A673 (cell line): ENCODE measurements at regions of chr5 and their contacts with region 1.

Region 1: DNA sequence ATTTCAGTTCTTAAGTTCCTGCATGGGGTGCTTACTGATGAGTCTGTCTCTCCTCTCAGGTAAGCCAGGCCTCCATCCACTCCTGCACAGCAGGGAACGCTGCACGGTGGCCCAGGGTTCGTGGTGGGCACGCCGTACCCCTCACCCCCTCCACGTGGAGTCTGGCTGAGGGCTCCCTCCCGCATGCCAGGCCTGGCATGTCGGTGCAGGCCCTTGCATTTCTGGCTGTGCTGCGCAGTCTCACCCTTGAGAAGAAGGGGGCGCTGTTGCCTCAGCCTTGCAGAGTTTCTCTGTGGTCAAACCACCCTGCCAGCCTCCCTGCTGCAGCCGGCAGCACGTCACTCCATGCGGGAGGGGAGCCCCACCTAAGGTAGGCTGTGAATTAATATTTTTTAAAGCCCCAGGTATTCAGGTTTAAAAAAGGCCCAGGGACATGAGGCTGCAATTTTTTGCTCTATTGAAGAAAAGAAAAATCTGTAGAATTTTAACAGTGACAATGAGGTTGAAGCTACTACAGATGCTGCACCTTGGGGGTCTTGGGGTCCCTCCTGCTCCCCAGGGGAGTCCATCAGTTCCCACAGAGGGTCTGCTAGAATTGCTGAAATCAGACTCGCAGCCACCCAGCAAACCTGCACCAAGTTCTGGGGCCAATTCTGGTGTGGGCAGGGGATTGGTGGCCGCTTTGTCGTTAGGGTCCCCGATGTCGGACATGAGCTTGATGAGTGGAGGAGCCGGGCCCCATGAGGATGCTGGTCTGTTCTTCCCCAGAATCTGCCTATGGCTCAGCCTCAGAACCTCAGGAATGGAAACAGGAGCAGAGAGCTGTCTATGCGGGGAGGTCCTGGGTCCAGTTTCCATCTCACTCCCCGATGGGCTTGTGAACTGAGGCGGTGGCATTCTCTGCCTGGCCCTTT is 52.6 kb downstream of the TENT4A start:
- DNase-seq: peak; percentile 82
- H3K4me3 ChIP-seq: no peak overlapping the region
- H3K27ac ChIP-seq: no peak overlapping the region
- H3K4me1 ChIP-seq: peaks cover 7% of the 10 kb centered on the region
- H3K27me3 ChIP-seq: no peaks in the 10 kb centered on the region
- CTCF ChIP-seq: peak; percentile 90

Region 2: DNA sequence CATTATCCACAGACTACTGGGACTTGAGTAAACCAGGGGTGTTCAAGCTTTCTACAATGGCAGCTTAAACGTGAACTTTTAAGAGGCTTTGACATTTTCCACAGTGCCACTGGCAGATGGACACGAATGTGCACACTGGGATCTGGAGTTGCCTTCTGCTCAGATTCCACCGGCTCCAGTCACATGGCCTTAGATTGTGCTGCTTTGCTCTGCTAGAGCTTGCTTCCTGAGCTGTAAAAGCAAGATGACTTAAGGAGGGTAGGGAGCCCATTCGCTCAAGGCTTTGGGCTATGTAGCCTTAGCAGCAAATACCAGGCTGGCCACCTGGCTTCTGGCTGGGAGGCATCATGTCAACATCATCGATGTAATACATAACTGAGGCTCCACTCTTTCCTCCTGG is 824.4 kb before region 1 on chr5:
- CTCF ChIA-PET with region 1: no interaction called
- POLR2A ChIA-PET with region 1: no interaction called
- intact Hi-C with region 1: no loop called
- DNase-seq: no peak
- H3K4me3 ChIP-seq: no peak overlapping the region
- H3K27ac ChIP-seq: no peak overlapping the region
- H3K4me1 ChIP-seq: no peaks in the 10 kb centered on the region
- H3K27me3 ChIP-seq: no peaks in the 10 kb centered on the region
- CTCF ChIP-seq: no peak

Region 3: DNA sequence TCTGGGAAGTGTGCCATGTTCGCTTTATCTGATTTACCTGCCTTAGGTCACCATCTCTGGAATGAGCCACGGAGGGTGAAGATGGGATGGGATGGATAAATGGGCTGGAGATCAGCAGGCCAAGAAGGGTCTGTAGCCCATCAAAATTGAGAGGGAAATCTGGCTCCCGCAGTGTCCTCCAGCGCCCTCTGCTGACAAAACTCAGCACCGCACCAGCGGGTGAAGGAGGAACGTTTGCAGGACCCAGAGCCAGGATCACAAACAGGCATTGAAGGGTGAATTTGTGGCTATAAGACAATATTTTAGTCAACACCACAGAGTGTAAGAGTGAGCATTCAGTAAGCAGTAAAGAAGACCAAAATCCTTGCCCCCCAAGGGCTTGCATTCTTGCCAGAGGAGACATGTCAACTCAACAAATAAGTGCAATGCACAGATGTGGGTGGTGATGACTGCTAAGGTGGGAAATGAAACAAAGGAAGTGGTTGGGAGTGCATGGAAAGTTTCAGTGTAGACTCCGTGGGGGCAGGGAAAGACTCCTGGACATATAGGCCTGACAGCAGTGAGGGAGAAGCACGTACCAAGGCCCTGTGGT is 71.7 kb after region 1 on chr5:
- CTCF ChIA-PET with region 1: no interaction called
- POLR2A ChIA-PET with region 1: no interaction called
- intact Hi-C with region 1: loop called (anchors 1 kb)
- DNase-seq: peak; percentile 63
- H3K4me3 ChIP-seq: no peak overlapping the region
- H3K27ac ChIP-seq: no peak overlapping the region
- H3K4me1 ChIP-seq: no peaks in the 10 kb centered on the region
- H3K27me3 ChIP-seq: peaks cover 29% of the 10 kb centered on the region
- CTCF ChIP-seq: peak; percentile 84

Region 4: DNA sequence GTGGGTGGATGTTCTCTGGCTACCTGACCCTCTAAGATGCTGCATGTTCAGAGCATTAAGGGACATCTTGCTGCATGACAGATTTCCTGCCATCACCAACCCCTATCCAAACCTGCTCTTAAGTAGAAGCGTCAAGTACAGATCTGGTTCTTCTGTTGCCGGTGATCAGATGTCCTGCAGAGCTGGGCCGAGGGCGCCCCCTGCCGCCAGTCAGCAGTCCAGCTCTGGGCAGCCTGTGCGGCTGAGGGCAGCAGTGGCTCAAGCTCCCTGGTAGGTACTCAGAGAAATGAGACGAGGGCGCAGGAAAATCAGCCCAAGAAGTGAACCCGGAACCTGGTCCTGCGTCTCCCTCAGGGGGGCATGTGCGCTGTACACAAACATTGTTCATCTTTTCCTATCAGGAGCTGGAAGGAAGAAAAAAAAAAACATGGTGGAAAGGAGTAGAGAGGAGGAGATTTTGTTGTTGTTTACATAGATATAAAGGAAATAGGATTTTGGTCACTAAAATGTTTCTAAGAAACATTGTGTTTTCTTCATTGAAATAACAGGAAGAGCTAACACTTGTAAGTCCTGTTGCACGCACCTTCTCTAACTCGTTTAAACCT is 989.2 kb after region 1 on chr5:
- CTCF ChIA-PET with region 1: no interaction called
- POLR2A ChIA-PET with region 1: no interaction called
- intact Hi-C with region 1: loop called (anchors 10 kb)
- DNase-seq: peak; percentile 45
- H3K4me3 ChIP-seq: no peak overlapping the region
- H3K27ac ChIP-seq: no peak overlapping the region
- H3K4me1 ChIP-seq: no peaks in the 10 kb centered on the region
- H3K27me3 ChIP-seq: peaks cover 20% of the 10 kb centered on the region
- CTCF ChIP-seq: peak; percentile 75